ENCODE measurements at regions of chr14 and their contacts with region 1.

Region 1: DNA sequence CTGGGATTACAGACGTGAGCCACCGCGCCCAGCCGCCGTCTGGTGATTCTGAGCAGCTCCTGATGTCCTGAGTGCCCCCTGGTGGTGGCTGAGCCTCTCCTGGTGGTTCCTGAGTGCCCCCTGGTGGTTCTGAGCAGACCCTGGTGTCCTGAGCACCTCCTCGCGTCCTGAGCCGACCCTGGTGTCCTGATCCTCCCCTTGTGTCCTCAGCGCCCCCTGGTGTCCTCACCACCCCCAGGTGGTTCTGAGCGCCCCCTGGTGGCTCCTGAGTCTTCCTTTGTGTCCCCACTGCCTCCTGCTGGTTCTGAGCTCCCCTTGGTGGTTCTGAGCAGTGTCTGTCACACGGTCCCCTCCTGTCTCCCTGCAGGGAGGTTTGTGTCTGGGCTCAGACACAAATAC is 1304.9 kb downstream of the TMEM121 start:
- DNase-seq: peak; percentile 42
- ATAC-seq: no peak
- H3K4me3 ChIP-seq: no peak overlapping the region
- H3K27ac ChIP-seq: no peak overlapping the region
- H3K4me1 ChIP-seq: no peaks in the 10 kb centered on the region
- H3K27me3 ChIP-seq: no peaks in the 10 kb centered on the region; the same call in 1 of the 2 replicates
- CTCF ChIP-seq: peak; percentile 34

Region 2: GRCh38 chr14:106844608-106845285 is 13.4 kb after region 1 on chr14:
- CTCF ChIA-PET with region 1: interaction called, 12 read pairs
- POLR2A ChIA-PET with region 1: no interaction called
- in situ Hi-C with region 1: no loop called
- intact Hi-C with region 1: no loop called
- DNase-seq: no peak
- ATAC-seq: peak; percentile 82
- H3K4me3 ChIP-seq: peak overlapping the region; percentile 43 to 58
- H3K27ac ChIP-seq: no peak overlapping the region
- H3K4me1 ChIP-seq: peaks cover 8% of the 10 kb centered on the region; the same call in 1 of the 2 replicates
- H3K27me3 ChIP-seq: peaks cover 2% of the 10 kb centered on the region; the same call in 1 of the 2 replicates
- CTCF ChIP-seq: no peak

Measured in Panc1 (cell line).